Right lobe of liver (tissue), 6 donors: ENCODE measurements at regions of chr3 and their contacts with region 1.

Region 1: DNA sequence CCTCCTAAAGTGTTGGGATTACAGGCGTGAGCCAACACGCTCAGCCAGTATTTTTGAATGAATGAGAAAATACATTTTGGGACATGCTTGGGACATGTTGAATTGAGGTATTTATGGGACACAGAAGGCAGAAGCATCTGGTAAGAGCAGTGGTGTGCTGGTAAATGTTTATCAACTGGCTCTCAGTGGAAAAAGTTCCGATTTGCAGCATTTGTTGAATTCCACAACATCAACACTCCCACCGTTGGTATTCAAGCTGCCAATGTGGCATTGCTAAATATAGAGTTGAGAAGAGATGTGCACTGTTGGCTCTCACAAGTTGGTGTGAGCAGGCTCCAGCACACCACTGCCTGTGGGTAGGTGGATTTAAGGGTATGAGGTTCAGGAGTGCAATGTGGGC is 35.8 kb upstream of the LRRFIP2 start:
- DNase-seq: no peak
- ATAC-seq: no peak
- H3K4me3 ChIP-seq: no peak overlapping the region
- H3K27ac ChIP-seq: no peak overlapping the region
- H3K4me1 ChIP-seq: no peaks in the 10 kb centered on the region
- H3K27me3 ChIP-seq: no peaks in the 10 kb centered on the region
- CTCF ChIP-seq: no peak
- POLR2A ChIP-seq: no peak

Region 2: DNA sequence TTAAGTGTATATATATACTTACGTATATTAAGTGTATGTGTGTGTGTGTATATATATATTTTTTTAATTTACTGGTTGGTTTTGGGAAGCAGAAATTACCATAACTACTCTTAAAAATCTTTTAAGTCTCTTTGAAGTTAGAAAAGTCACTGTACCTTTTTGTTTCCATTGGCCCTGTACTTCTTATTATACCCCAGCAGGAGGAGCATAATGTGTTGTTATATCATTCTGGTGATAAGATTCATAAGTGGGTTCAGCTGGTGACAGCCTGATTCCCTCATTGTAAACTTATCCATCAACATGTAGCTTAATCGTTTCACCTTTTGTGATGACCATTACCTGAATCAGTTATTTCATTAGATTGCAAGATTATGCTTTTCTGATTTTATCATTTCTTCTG is 186.1 kb before region 1 on chr3:
- intact Hi-C with region 1: loop called (anchors 10 kb)
- DNase-seq: no peak
- ATAC-seq: peak in 3 of 4 donors; percentile 38 to 58 (median 51)
- H3K4me3 ChIP-seq: no peak overlapping the region
- H3K27ac ChIP-seq: no peak overlapping the region
- H3K4me1 ChIP-seq: peaks cover 0 to 15% (median 0%) of the 10 kb centered on the region in 4 donors
- H3K27me3 ChIP-seq: no peaks in the 10 kb centered on the region
- CTCF ChIP-seq: peak; percentile 31 to 48 (median 38)
- POLR2A ChIP-seq: no peak

Region 3: GRCh38 chr3:37308247-37308646 is 98.0 kb after region 1 on chr3:
- intact Hi-C with region 1: no loop called
- DNase-seq: no peak
- ATAC-seq: peak in 3 of 4 donors; percentile 56 to 62 (median 56)
- H3K4me3 ChIP-seq: no peak overlapping the region
- H3K27ac ChIP-seq: no peak overlapping the region
- H3K4me1 ChIP-seq: no peaks in the 10 kb centered on the region
- H3K27me3 ChIP-seq: no peaks in the 10 kb centered on the region
- CTCF ChIP-seq: peak in 3 of 4 donors; percentile 38 to 47 (median 44)
- POLR2A ChIP-seq: no peak

Region 4: GRCh38 chr3:37320276-37320675 is 110.0 kb after region 1 on chr3:
- intact Hi-C with region 1: no loop called
- DNase-seq: no peak
- ATAC-seq: no peak
- H3K4me3 ChIP-seq: no peak overlapping the region
- H3K27ac ChIP-seq: no peak overlapping the region
- H3K4me1 ChIP-seq: no peaks in the 10 kb centered on the region
- H3K27me3 ChIP-seq: no peaks in the 10 kb centered on the region
- CTCF ChIP-seq: no peak
- POLR2A ChIP-seq: no peak

Region 5: DNA sequence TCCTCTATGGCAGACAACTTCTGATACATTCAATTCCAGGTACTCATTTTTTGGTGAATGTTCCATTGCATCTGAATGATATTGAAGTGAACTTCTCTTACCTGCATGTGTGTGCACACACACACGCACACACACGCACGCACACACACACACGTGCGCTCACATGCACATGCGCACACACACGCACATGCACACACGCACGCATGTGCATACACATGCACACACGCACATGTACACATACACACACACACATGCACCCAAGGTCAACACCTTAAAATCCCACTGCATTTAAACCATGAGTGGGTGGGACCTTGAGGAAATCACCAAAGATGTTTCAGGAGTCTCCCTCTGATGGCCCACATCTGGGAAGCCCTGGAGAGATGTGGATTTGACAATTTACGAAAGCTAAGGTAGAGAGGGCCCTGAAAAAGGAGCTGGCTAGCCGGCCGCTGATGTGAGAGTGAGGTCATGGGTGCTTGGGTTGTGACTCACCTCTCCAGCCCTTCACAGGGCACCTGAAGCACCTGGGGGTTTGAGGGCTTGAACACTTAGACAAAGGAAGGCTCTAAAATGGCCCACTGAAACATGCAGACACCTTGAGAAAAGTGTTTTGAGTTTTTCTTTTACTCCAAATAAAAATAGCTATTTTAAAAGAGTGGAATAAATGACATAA is 233.3 kb after region 1 on chr3:
- intact Hi-C with region 1: no loop called
- DNase-seq: no peak
- ATAC-seq: no peak
- H3K4me3 ChIP-seq: no peak overlapping the region
- H3K27ac ChIP-seq: no peak overlapping the region
- H3K4me1 ChIP-seq: no peaks in the 10 kb centered on the region
- H3K27me3 ChIP-seq: no peaks in the 10 kb centered on the region
- CTCF ChIP-seq: no peak
- POLR2A ChIP-seq: no peak